ENCODE measurements at regions of chr14 and their contacts with region 1.

Region 1: DNA sequence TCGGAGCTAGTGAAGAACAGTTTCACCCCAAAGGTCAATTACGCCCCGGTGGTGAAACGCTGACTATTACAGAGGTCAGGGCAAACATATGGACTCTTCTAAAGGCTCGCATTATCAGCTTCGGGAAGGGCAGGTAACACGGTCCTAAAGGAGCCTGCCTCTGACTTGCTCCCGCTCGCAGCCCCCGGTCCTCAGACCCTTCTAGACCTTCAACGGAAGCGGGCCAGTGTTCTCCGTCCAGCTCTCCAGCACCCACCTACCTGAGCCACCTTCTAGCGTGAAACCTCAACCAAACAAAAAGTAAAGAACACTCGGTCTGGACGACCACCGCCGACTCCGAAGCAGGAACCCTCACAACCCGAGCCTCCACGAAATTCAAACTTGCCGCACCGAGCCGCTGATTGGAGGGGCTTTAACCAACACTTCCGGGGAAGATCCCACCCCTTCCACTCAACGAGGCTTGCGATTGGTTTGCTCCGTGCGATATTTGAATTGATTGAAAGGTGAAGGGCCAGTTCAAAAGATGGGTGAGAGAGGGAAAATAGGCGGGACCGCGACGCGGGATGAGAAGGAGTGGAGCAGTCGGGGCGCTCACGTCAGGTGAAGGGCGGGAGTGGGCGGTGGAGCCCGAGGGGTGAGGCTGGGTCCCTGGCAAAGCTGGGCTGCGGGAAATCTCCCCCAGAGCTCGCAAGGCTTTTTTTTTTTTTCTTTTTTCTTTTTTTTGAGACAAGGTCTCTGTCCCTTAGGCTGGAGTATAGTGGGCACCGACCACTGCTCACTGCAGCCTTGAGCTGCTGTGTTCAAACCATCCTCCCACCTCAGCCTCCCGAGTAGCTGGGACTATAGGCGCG is at the start of gene DLGAP5:
- DNase-seq: peak; percentile 88 to 94
- ATAC-seq: peak; percentile 98 to 100 (median 99)
- H3K4me3 ChIP-seq: peak within 1 kb of the TSS; percentile 35 to 78 (median 59)
- H3K27ac ChIP-seq: peak within 1 kb of the TSS in 8 of 10 donors; percentile 40 to 76 (median 53)
- H3K4me1 ChIP-seq: peaks cover 0 to 25% (median 6%) of the 10 kb centered on the region in 9 donors
- H3K27me3 ChIP-seq: no peaks in the 10 kb centered on the region
- CTCF ChIP-seq: no peak
- total RNA-seq, gene DLGAP5: 0.07 to 5.1 (median 0.49) TPM in 5 of 10 donors, not detected in the others

Region 2: DNA sequence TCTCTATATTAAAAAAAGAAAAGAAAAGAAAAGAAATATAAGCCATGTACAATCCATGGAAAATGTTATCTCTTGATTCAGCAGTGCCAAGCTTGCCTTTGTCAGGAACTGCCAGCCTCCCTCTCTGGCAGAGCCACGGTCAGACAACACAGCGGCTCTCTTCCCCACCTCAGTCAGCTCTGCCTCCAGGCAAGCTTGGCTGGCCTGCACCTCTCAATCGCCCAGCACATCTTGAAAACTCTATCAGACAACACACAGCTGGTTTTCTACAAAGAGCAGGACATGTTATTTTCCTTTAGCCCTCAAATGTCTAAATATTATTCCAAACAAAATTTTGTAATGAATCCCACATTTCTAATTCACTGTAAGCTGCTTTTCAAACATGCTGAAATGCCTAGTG is 268.8 kb before region 1 on chr14:
- intact Hi-C with region 1: no loop called
- DNase-seq: no peak
- ATAC-seq: no peak
- H3K4me3 ChIP-seq: no peak overlapping the region
- H3K27ac ChIP-seq: no peak overlapping the region
- H3K4me1 ChIP-seq: peaks cover 0 to 4% (median 0%) of the 10 kb centered on the region in 9 donors
- H3K27me3 ChIP-seq: peaks cover 0 to 12% (median 0%) of the 10 kb centered on the region in 7 donors
- CTCF ChIP-seq: no peak

Region 3: GRCh38 chr14:55238019-55238680 is 46.7 kb after region 1 on chr14:
- intact Hi-C with region 1: loop called in 1 of 10 experiments (anchors 1 kb)
- DNase-seq: no peak
- ATAC-seq: no peak
- H3K4me3 ChIP-seq: no peak overlapping the region
- H3K27ac ChIP-seq: no peak overlapping the region
- H3K4me1 ChIP-seq: peaks cover 0 to 13% (median 2%) of the 10 kb centered on the region in 9 donors
- H3K27me3 ChIP-seq: peaks cover 0 to 15% (median 4%) of the 10 kb centered on the region in 7 donors
- CTCF ChIP-seq: no peak

Measured in heart right ventricle (tissue), 16 donors.